Heart left ventricle (tissue), 16 donors: ENCODE measurements at regions of chr12 and their contacts with region 1.

Region 1: GRCh38 chr12:1760566-1761382 is 59.6 kb upstream of the LRTM2 start:
- DNase-seq: no peak
- ATAC-seq: peak in 3 of 4 donors; percentile 37 to 68 (median 50)
- H3K4me3 ChIP-seq: no peak overlapping the region
- H3K27ac ChIP-seq: no peak overlapping the region
- H3K4me1 ChIP-seq: peaks cover 0 to 19% (median 0%) of the 10 kb centered on the region in 12 donors
- H3K27me3 ChIP-seq: no peaks in the 10 kb centered on the region
- CTCF ChIP-seq: no peak
- POLR2A ChIP-seq: no peak

Region 2: GRCh38 chr12:1553987-1554982 is 206.5 kb before region 1 on chr12:
- intact Hi-C with region 1: no loop called
- DNase-seq: no peak
- ATAC-seq: no peak
- H3K4me3 ChIP-seq: no peak overlapping the region
- H3K27ac ChIP-seq: no peak overlapping the region
- H3K4me1 ChIP-seq: no peaks in the 10 kb centered on the region
- H3K27me3 ChIP-seq: no peaks in the 10 kb centered on the region
- CTCF ChIP-seq: no peak
- POLR2A ChIP-seq: no peak

Region 3: GRCh38 chr12:1698638-1699214 is 62.0 kb before region 1 on chr12:
- intact Hi-C with region 1: loop called in 2 of 10 experiments (anchors 5 to 10 kb)
- DNase-seq: no peak
- ATAC-seq: no peak
- H3K4me3 ChIP-seq: no peak overlapping the region
- H3K27ac ChIP-seq: no peak overlapping the region
- H3K4me1 ChIP-seq: peaks cover 0 to 74% (median 19%) of the 10 kb centered on the region in 12 donors
- H3K27me3 ChIP-seq: no peaks in the 10 kb centered on the region
- CTCF ChIP-seq: no peak
- POLR2A ChIP-seq: no peak

Region 4: GRCh38 chr12:1719139-1719538 is 41.6 kb before region 1 on chr12:
- intact Hi-C with region 1: loop called in 2 of 10 experiments (anchors 10 kb)
- DNase-seq: no peak
- ATAC-seq: peak in 2 of 4 donors; percentile 27 to 50
- H3K4me3 ChIP-seq: no peak overlapping the region
- H3K27ac ChIP-seq: no peak overlapping the region
- H3K4me1 ChIP-seq: peaks cover 0 to 80% (median 30%) of the 10 kb centered on the region in 12 donors
- H3K27me3 ChIP-seq: no peaks in the 10 kb centered on the region
- CTCF ChIP-seq: no peak
- POLR2A ChIP-seq: no peak

Region 5: GRCh38 chr12:2163172-2163941 is 402.6 kb after region 1 on chr12:
- intact Hi-C with region 1: no loop called
- DNase-seq: peak; percentile 91 to 95 (median 93)
- ATAC-seq: peak; percentile 79 to 94 (median 91)
- H3K4me3 ChIP-seq: no peak overlapping the region
- H3K27ac ChIP-seq: peak overlapping the region; percentile 60 to 86 (median 82)
- H3K4me1 ChIP-seq: peaks cover 4 to 67% (median 43%) of the 10 kb centered on the region in 12 donors
- H3K27me3 ChIP-seq: no peaks in the 10 kb centered on the region
- CTCF ChIP-seq: peak in 4 of 12 donors; percentile 5 to 14 (median 8)
- POLR2A ChIP-seq: no peak